ENCODE measurements at regions of chr17 and their contacts with region 1.

Region 1: DNA sequence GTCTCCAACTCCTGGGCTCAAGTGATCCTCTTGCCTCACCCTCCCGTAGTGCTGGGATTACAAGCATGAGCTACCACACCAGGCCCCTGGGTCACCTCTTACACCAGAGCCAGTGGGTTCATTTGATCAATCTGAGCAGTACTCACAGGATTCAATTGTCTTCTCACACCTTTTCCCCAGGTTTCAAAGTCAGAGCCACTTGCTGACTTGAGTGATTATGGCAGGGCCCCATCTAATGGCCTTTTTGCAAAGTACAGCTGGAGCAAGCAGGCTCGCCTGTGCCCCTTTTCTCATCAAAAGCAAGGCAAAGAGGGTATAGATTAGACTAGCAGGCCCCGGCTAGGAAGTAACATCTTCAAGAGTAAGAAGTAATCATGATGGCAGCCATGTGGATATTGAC is 114.8 kb upstream of the NOL11 start:
- DNase-seq: peak; percentile 67
- H3K4me3 ChIP-seq: no peak overlapping the region
- H3K27ac ChIP-seq: no peak overlapping the region
- H3K4me1 ChIP-seq: peaks cover 19% of the 10 kb centered on the region
- H3K27me3 ChIP-seq: no peaks in the 10 kb centered on the region
- CTCF ChIP-seq: peak; percentile 68

Region 2: DNA sequence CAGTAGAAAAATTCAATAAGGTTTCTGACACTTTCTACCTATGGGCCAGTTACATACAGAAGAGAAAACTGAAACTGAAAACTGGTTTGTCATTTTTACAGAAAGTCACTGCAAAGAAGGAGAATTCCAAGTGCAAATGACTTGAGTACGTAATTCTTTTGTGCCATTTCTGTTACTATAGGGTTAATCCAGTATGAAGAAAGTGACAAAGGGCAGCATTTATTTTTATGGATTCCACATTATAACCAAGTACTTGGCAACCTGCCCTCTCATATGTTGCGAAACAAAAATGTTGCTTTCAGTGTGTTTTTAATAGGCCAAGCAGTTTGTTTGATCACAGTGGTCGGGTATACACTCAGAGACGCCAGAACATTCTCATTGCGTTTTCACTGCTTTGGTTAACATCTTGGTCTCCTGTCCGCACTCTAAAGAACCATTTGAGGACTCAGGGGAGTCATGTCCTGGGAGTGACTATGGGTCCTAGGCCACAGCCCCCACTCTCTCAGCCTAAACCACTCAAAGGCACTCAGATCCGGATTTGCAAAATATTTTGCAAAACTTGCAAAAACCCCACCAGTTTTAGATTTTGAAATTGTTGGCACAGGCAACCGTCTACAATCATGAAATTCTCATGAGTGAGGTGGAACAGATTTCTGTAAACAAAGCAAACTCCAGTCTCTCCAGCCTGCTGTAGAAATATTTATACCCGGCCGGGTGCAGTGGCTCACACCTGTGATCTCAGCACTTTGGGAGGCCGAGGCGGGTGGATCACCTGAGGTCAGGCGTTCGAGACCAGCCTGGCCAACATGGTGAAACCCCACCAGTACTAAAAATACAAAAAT is 342.6 kb before region 1 on chr17:
- CTCF ChIA-PET with region 1: no interaction called
- POLR2A ChIA-PET with region 1: no interaction called
- intact Hi-C with region 1: no loop called
- DNase-seq: peak; percentile 83
- H3K4me3 ChIP-seq: peak overlapping the region; percentile 3
- H3K27ac ChIP-seq: peak overlapping the region; percentile 8
- H3K4me1 ChIP-seq: peaks cover 25% of the 10 kb centered on the region
- H3K27me3 ChIP-seq: no peaks in the 10 kb centered on the region
- CTCF ChIP-seq: no peak

Region 3: GRCh38 chr17:67488161-67488560 is 114.8 kb before region 1 on chr17:
- CTCF ChIA-PET with region 1: no interaction called
- POLR2A ChIA-PET with region 1: no interaction called
- intact Hi-C with region 1: loop called (anchors 10 kb)
- DNase-seq: no peak
- H3K4me3 ChIP-seq: no peak overlapping the region
- H3K27ac ChIP-seq: no peak overlapping the region
- H3K4me1 ChIP-seq: peaks cover 37% of the 10 kb centered on the region
- H3K27me3 ChIP-seq: no peaks in the 10 kb centered on the region
- CTCF ChIP-seq: no peak

Region 4: GRCh38 chr17:67779098-67779672 is 176.2 kb after region 1 on chr17:
- CTCF ChIA-PET with region 1: no interaction called
- POLR2A ChIA-PET with region 1: interaction called, 18 read pairs
- intact Hi-C with region 1: no loop called
- DNase-seq: peak; percentile 60
- H3K4me3 ChIP-seq: no peak overlapping the region
- H3K27ac ChIP-seq: no peak overlapping the region
- H3K4me1 ChIP-seq: no peaks in the 10 kb centered on the region
- H3K27me3 ChIP-seq: no peaks in the 10 kb centered on the region
- CTCF ChIP-seq: peak; percentile 76